ENCODE measurements at regions of chr4 and their contacts with region 1.

Region 1: GRCh38 chr4:78864405-78865024 is 74.7 kb downstream of the PAQR3 start:
- DNase-seq: peak in 7 of 9 donors; percentile 55 to 79 (median 70)
- ATAC-seq: peak; percentile 81
- H3K4me3 ChIP-seq: no peak overlapping the region
- H3K4me3 Mint-ChIP-seq: no peak overlapping the region
- H3K27ac ChIP-seq: no peak overlapping the region
- H3K27ac Mint-ChIP-seq: peak overlapping the region in 1 of 9 donors; percentile 33
- H3K4me1 ChIP-seq: no peaks in the 10 kb centered on the region
- H3K4me1 Mint-ChIP-seq: peaks cover 0 to 6% (median 4%) of the 10 kb centered on the region in 7 donors
- H3K27me3 ChIP-seq: no peaks in the 10 kb centered on the region
- H3K27me3 Mint-ChIP-seq: no peaks in the 10 kb centered on the region

Region 2: GRCh38 chr4:77240469-77241066 is 1623.9 kb before region 1 on chr4:
- CTCF ChIA-PET with region 1: no interaction called
- POLR2A ChIA-PET with region 1: no interaction called
- intact Hi-C with region 1: loop called in 1 of 2 experiments (anchors 10 kb)
- DNase-seq: peak in 8 of 9 donors; percentile 11 to 59 (median 30)
- ATAC-seq: peak; percentile 47
- H3K4me3 ChIP-seq: no peak overlapping the region
- H3K4me3 Mint-ChIP-seq: no peak overlapping the region
- H3K27ac ChIP-seq: no peak overlapping the region
- H3K27ac Mint-ChIP-seq: peak overlapping the region in 1 of 9 donors; percentile 10
- H3K4me1 ChIP-seq: no peaks in the 10 kb centered on the region
- H3K4me1 Mint-ChIP-seq: no peaks in the 10 kb centered on the region
- H3K27me3 ChIP-seq: no peaks in the 10 kb centered on the region
- H3K27me3 Mint-ChIP-seq: peaks cover 3 to 12% (median 6%) of the 10 kb centered on the region in 5 donors

Region 3: DNA sequence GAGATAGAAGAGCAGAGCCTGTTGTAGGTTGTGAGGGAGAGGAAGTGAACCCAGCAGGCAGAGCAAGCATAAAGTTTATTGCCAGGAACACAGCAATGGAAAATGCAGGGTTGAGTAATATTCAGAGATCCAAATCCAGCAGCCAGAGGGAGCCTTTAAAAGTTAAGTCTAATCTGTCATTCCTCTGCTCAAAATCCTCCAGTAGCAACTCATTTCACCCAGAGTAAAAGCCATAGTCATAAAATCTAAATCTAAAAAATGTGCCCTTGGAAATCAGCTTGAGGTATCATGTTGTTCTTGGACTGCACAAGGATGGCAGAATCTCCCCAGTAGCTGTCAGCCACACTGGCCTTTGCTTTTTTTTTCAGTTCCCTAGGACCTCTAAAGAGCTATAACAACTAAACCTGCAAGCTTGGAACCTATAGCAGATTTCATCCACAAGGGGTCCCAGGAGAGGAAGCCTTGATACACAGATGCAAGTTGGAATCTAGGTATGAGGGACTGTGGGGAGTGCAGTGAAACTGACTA is 870.3 kb before region 1 on chr4:
- CTCF ChIA-PET with region 1: no interaction called
- POLR2A ChIA-PET with region 1: no interaction called
- intact Hi-C with region 1: loop called in 1 of 2 experiments (anchors 1 kb)
- DNase-seq: peak in 5 of 9 donors; percentile 1 to 13 (median 5)
- ATAC-seq: no peak
- H3K4me3 ChIP-seq: no peak overlapping the region
- H3K4me3 Mint-ChIP-seq: no peak overlapping the region
- H3K27ac ChIP-seq: no peak overlapping the region
- H3K27ac Mint-ChIP-seq: no peak overlapping the region
- H3K4me1 ChIP-seq: no peaks in the 10 kb centered on the region
- H3K4me1 Mint-ChIP-seq: peaks cover 0 to 3% (median 0%) of the 10 kb centered on the region in 7 donors
- H3K27me3 ChIP-seq: peaks cover 0 to 3% of the 10 kb centered on the region in 2 donors
- H3K27me3 Mint-ChIP-seq: peaks cover 8 to 19% (median 12%) of the 10 kb centered on the region in 5 donors

Region 4: GRCh38 chr4:78320349-78320935 is 544.1 kb before region 1 on chr4:
- CTCF ChIA-PET with region 1: no interaction called
- POLR2A ChIA-PET with region 1: no interaction called
- intact Hi-C with region 1: loop called in 1 of 2 experiments (anchors 10 kb)
- DNase-seq: no peak
- ATAC-seq: no peak
- H3K4me3 ChIP-seq: no peak overlapping the region
- H3K4me3 Mint-ChIP-seq: peak overlapping the region in 2 of 10 donors; percentile 51 to 58
- H3K27ac ChIP-seq: no peak overlapping the region
- H3K27ac Mint-ChIP-seq: no peak overlapping the region
- H3K4me1 ChIP-seq: no peaks in the 10 kb centered on the region
- H3K4me1 Mint-ChIP-seq: peaks cover 0 to 13% (median 0%) of the 10 kb centered on the region in 7 donors
- H3K27me3 ChIP-seq: peaks cover 0 to 4% of the 10 kb centered on the region in 2 donors
- H3K27me3 Mint-ChIP-seq: peaks cover 25 to 50% (median 28%) of the 10 kb centered on the region in 5 donors

Region 5: GRCh38 chr4:78592104-78592783 is 272.3 kb before region 1 on chr4:
- CTCF ChIA-PET with region 1: interaction called, 5 read pairs
- POLR2A ChIA-PET with region 1: no interaction called
- intact Hi-C with region 1: loop called in 1 of 2 experiments (anchors 1 kb)
- DNase-seq: peak in 1 of 9 donors; percentile 3
- ATAC-seq: no peak
- H3K4me3 ChIP-seq: no peak overlapping the region
- H3K4me3 Mint-ChIP-seq: no peak overlapping the region
- H3K27ac ChIP-seq: no peak overlapping the region
- H3K27ac Mint-ChIP-seq: no peak overlapping the region
- H3K4me1 ChIP-seq: no peaks in the 10 kb centered on the region
- H3K4me1 Mint-ChIP-seq: peaks cover 0 to 2% (median 0%) of the 10 kb centered on the region in 7 donors
- H3K27me3 ChIP-seq: no peaks in the 10 kb centered on the region
- H3K27me3 Mint-ChIP-seq: peaks cover 0 to 4% (median 0%) of the 10 kb centered on the region in 5 donors

Region 6: GRCh38 chr4:78644744-78645330 is 219.7 kb before region 1 on chr4:
- CTCF ChIA-PET with region 1: interaction called, 3 read pairs
- POLR2A ChIA-PET with region 1: no interaction called
- intact Hi-C with region 1: loop called (anchors 1 to 2 kb)
- DNase-seq: peak in 7 of 9 donors; percentile 21 to 64 (median 55)
- ATAC-seq: peak; percentile 95
- H3K4me3 ChIP-seq: no peak overlapping the region
- H3K4me3 Mint-ChIP-seq: peak overlapping the region in 1 of 10 donors; percentile 8
- H3K27ac ChIP-seq: no peak overlapping the region
- H3K27ac Mint-ChIP-seq: peak overlapping the region in 1 of 9 donors; percentile 28
- H3K4me1 ChIP-seq: no peaks in the 10 kb centered on the region
- H3K4me1 Mint-ChIP-seq: peaks cover 5 to 31% (median 13%) of the 10 kb centered on the region in 7 donors
- H3K27me3 ChIP-seq: no peaks in the 10 kb centered on the region
- H3K27me3 Mint-ChIP-seq: no peaks in the 10 kb centered on the region

Measured in naive thymus-derived CD4-positive, alpha-beta T cell (primary cell).